PC-9 (cell line): ENCODE measurements at regions of chr16 and their contacts with region 1.

Region 1: GRCh38 chr16:48156790-48157209 is 1.0 kb upstream of the ABCC12 start:
- DNase-seq: peak; percentile 45 to 82
- H3K4me3 ChIP-seq: no peak overlapping the region
- H3K27ac ChIP-seq: peak overlapping the region; percentile 89
- H3K4me1 ChIP-seq: peaks cover 26% of the 10 kb centered on the region
- H3K27me3 ChIP-seq: no peaks in the 10 kb centered on the region
- CTCF ChIP-seq: peak; percentile 87

Region 2: DNA sequence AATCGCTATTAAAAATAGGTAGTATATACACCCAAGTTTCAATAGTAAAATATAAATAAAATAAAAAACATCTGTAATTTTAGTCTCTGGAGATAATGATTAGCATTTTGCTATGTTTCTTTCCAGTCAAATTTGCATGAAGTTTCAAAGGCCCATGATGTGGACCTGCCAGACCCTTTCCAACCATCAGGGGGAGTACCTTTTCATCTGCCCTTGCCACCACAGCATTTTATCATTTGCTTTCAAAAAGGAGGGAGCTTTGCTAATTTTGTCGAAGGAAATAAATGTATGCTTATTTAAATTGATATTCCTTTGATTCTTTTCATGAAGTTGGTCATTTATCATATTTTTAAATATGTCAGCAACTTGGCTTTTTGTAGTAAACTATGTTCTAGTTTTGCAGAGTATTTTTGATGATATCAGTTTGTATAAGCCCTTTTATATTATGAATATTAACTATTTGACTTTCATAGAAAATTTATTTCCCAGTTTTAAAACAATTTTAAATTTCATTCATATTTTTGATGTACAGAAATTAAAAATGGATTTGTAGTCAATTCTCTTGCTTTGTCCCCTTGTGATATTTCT is 897.8 kb before region 1 on chr16:
- CTCF ChIA-PET with region 1: no interaction called
- POLR2A ChIA-PET with region 1: no interaction called
- intact Hi-C with region 1: loop called (anchors 5 kb)
- DNase-seq: no peak
- H3K4me3 ChIP-seq: no peak overlapping the region
- H3K27ac ChIP-seq: no peak overlapping the region
- H3K4me1 ChIP-seq: no peaks in the 10 kb centered on the region
- H3K27me3 ChIP-seq: no peaks in the 10 kb centered on the region
- CTCF ChIP-seq: peak; percentile 71

Region 3: DNA sequence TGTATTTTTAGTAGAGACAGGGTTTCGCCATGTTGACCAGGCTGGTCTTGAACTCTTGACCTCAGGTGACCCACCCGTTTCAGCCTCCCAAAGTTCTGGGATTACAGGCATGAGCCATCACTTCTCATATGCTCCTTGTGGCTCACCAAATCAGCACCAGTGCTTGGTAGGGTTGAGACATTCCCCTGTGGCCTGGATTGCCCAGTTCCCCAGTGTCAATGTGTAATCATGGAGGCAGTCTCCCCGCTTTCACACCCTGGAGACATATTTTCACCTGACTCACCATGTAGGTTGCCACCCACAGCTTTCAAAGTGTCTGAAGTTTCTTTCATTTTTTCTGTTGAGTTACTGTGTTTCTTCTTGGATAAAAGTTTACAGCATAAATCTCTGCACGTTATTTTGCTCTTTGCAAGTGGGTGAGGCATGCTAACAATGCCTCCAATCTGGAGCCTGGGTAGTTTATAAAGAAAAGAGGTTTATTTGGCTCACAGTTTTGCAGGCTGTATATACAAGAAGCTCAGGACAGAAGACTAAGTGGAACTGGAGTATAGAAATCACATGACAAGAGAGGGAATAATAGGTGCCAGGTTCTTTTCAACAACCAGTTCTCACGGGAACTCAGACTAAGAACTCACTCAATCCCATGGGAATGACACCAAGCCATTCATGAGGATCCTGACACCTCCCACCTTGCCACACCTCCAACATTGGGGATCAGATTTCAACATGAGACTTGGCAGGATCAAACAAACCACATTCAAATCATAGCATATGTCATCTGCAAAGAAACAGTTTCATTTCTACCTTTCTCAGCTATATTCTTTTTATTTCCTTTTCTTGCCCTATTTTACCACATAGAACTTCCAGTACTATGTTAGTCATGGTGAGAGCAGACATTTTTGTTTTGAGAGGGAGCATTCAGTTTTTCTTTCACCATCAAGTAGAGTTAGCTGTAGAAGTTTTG is 582.4 kb before region 1 on chr16:
- CTCF ChIA-PET with region 1: no interaction called
- POLR2A ChIA-PET with region 1: no interaction called
- intact Hi-C with region 1: loop called (anchors 5 kb)
- DNase-seq: peak; percentile 55 to 81
- H3K4me3 ChIP-seq: no peak overlapping the region
- H3K27ac ChIP-seq: peak overlapping the region; percentile 89
- H3K4me1 ChIP-seq: peaks cover 21% of the 10 kb centered on the region
- H3K27me3 ChIP-seq: no peaks in the 10 kb centered on the region
- CTCF ChIP-seq: no peak

Region 4: DNA sequence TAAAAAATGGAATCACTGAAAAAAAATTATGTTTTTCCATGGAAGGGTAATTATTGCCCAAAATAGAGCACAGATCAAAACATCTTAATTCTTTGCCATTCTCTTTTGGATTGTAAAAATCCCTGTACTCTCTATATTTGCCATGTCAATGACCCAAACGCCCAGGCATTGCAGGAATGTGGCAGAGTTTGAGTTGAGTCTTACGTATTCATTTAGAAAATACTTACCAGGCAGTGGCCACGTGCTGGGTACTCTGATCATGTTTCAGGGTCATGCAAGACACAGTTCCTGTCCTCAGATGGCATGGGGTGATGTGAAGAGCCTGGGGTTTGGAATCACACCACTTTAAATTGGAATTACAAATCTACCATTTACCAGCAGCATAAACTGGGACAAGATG is 268.7 kb before region 1 on chr16:
- CTCF ChIA-PET with region 1: no interaction called
- POLR2A ChIA-PET with region 1: no interaction called
- intact Hi-C with region 1: loop called (anchors 1 kb)
- DNase-seq: peak; percentile 62 to 73
- H3K4me3 ChIP-seq: no peak overlapping the region
- H3K27ac ChIP-seq: peak overlapping the region; percentile 68
- H3K4me1 ChIP-seq: peaks cover 21% of the 10 kb centered on the region
- H3K27me3 ChIP-seq: no peaks in the 10 kb centered on the region
- CTCF ChIP-seq: no peak

Region 5: DNA sequence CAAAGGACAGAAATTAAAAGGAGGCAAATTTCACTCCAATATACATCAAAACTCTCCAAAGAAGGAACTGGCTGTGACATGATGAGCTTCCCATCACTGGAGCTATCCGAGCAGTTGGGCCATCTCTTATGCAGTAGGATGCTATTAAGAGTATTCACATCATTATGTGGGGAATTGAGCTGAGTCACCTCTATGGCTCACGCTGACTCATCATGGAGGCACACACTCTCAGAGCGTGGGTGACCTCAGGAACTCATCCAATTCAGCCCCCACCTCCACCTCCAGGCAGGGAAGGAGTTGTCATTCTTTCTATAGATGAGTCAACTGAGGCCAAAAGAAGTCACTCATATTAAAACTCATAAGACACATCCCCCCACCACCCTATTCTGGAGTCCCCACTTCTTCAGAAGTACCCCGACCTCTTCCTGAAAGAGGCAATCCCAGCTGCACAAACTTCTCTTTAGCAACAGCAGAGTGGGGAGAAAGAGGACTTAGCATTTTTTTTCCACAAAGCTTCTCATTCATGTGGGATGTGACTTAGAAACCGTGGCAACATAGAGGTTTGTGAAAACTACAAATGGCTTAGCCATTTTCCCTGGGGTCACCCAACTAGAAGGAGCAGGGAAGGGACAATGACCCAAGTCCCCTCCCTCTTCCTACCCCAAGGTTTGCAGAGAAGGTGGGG is 33.6 kb before region 1 on chr16:
- CTCF ChIA-PET with region 1: no interaction called
- POLR2A ChIA-PET with region 1: no interaction called
- intact Hi-C with region 1: loop called (anchors 1 kb)
- DNase-seq: peak; percentile 79 to 92
- H3K4me3 ChIP-seq: no peak overlapping the region
- H3K27ac ChIP-seq: peak overlapping the region; percentile 84
- H3K4me1 ChIP-seq: peaks cover 55% of the 10 kb centered on the region
- H3K27me3 ChIP-seq: no peaks in the 10 kb centered on the region
- CTCF ChIP-seq: no peak

Region 6: GRCh38 chr16:48143812-48144368 is 12.9 kb before region 1 on chr16:
- CTCF ChIA-PET with region 1: no interaction called
- POLR2A ChIA-PET with region 1: no interaction called
- intact Hi-C with region 1: no loop called
- DNase-seq: no peak
- H3K4me3 ChIP-seq: no peak overlapping the region
- H3K27ac ChIP-seq: no peak overlapping the region
- H3K4me1 ChIP-seq: no peaks in the 10 kb centered on the region
- H3K27me3 ChIP-seq: no peaks in the 10 kb centered on the region
- CTCF ChIP-seq: no peak